ENCODE measurements at regions of chr10 and their contacts with region 1.

Region 1: DNA sequence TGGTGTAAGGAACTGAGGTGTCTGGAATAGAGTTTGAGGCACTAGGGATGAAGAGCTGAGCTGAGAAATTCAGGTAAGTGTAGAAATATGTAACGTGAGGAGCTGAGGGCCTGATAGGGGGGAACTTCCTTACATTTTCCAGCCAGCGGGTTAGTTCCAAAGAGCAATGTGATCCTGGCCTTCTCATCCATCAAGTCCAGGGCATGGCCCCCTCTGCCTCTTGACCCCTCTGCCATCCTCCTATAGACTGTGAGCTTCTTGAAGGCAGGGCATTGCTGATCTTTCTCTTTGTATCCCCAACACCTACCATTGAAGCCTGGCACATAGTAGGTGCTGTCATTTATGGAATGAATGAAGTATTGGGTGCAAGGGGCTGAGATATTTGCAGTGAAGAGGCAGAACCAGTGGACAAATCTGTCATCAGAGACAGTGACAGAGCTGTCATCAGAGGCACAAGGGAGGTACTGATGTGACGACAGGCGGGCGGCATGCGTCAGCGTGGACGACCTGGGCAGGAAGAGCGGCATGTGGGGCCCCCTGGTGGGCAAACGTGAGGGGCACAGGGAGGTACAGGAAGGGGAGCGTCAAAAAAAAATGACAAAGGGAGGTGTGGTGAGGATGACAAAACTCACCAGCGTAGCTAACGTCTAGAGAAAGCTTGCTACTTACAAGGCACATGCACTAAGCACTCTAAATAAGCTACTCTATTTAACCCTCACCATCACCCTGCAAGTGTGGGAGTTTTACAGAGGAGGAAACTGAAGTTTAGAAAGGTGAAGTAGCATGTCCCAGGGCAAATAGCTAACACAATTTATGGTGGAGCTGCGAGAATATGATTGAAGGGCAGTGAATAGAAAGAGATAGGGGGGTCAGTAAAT is 5.2 kb upstream of the CAMK2G start:
- DNase-seq: peak; percentile 91
- H3K4me3 ChIP-seq: no peak overlapping the region
- H3K27ac ChIP-seq: no peak overlapping the region
- H3K4me1 ChIP-seq: 0 out of 2 replicates have a peak, but pooled peaks cover 3% of the 10 kb centered on the region
- H3K27me3 ChIP-seq: no peaks in the 10 kb centered on the region

Region 2: DNA sequence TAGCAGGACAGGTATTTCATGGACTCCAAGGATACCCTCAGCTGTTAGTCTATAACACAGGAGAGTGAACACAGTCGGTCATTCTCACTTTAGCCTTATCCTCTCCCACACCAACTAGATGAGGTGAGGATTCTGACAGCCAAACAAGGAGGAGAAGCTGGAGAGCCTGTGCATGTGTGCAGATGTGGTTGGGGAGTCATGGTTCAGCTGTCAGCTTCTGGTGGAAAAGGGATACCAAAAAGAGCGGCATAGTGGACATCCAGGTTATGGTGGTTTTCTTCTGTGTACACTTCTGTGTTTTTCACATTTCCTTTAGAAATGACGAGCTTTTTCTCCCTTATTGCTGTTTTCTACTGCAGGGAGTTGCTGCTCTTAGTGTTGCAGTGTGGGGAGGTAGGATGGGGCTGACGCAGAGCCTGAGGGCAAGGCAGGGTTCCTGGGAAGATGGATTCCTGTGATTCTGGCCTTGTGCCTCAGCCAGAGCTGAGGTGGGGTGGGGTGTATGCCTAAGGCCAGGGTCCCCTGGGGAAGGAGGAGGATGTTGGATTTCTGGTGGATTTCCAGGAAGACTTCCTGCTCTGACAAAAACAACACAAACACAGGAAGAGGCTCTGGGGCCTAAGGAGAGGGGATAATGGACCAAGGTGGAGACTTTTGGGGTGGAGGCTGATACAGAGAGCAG is 57.9 kb after region 1 on chr10:
- in situ Hi-C with region 1: loop called (anchors 5 kb)
- DNase-seq: no peak
- H3K4me3 ChIP-seq: no peak overlapping the region
- H3K27ac ChIP-seq: no peak overlapping the region
- H3K4me1 ChIP-seq: peaks cover 18% of the 10 kb centered on the region
- H3K27me3 ChIP-seq: no peaks in the 10 kb centered on the region

Region 3: DNA sequence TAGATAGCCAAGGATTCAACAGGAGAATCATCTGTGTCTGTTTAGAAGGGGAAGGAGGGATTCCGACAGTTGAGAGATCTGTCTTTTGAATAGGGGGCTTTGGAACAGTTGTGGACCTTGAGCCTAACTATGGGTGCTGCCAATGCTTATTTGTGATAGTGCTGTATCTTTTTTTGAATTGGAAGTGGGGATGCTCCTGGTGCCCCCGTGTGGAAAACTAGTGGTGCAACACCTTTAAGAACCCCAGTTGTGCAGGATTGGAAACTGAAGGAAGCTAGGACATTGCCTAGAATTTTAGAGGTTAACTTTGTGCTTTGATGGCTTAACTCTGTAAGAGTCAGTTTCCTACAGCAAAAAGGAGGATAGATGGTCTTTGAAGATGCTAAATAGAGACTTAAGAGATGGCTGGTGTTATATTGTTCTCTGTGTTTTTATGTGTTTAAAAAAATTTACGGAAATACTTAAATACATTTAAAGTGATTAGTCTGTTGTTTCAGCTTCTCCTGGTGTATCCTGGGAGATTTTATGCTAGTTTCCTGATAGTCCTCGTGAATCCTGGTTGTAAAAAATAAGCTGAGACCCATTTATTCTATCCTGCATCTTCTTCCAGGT is 201.8 kb after region 1 on chr10:
- in situ Hi-C with region 1: loop called (anchors 25 kb)
- DNase-seq: peak; percentile 69
- H3K4me3 ChIP-seq: no peak overlapping the region
- H3K27ac ChIP-seq: peak overlapping the region; percentile 43; the same call in 1 of the 2 replicates
- H3K4me1 ChIP-seq: peaks cover 50% of the 10 kb centered on the region
- H3K27me3 ChIP-seq: no peaks in the 10 kb centered on the region

Region 4: DNA sequence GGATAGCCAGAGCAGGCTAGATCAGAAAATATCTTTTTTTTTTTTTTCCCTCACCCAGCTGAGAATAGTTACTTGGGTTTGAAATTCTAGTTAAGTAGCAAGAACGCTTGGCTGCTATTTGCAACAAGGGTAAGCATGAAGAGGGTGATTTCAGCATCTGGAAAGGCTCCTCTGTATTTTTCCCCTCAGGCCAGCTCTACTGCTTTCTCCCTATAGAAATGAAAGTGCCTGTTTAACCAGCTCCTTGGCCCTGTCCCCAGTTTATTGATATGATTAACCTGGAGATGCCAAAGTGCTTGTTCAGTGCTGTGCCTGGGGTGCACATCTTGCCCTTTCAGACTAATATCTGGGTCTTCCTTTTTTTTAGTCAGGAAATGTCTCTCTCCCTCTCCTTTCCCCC is 234.0 kb after region 1 on chr10:
- in situ Hi-C with region 1: no loop called
- DNase-seq: peak; percentile 62
- H3K4me3 ChIP-seq: no peak overlapping the region
- H3K27ac ChIP-seq: peak overlapping the region; percentile 34
- H3K4me1 ChIP-seq: peaks cover 14% of the 10 kb centered on the region
- H3K27me3 ChIP-seq: no peaks in the 10 kb centered on the region